Mammary epithelial cell (primary cell): ENCODE measurements at regions of chr3 and their contacts with region 1.

Region 1: GRCh38 chr3:169348929-169349613 is 314.4 kb downstream of the MECOM start:
- DNase-seq: peak; percentile 92
- H3K4me3 ChIP-seq: no peak overlapping the region
- H3K27ac ChIP-seq: peak overlapping the region; percentile 85
- H3K4me1 ChIP-seq: peaks cover 36% of the 10 kb centered on the region
- H3K27me3 ChIP-seq: no peaks in the 10 kb centered on the region
- CTCF ChIP-seq: no peak

Region 2: DNA sequence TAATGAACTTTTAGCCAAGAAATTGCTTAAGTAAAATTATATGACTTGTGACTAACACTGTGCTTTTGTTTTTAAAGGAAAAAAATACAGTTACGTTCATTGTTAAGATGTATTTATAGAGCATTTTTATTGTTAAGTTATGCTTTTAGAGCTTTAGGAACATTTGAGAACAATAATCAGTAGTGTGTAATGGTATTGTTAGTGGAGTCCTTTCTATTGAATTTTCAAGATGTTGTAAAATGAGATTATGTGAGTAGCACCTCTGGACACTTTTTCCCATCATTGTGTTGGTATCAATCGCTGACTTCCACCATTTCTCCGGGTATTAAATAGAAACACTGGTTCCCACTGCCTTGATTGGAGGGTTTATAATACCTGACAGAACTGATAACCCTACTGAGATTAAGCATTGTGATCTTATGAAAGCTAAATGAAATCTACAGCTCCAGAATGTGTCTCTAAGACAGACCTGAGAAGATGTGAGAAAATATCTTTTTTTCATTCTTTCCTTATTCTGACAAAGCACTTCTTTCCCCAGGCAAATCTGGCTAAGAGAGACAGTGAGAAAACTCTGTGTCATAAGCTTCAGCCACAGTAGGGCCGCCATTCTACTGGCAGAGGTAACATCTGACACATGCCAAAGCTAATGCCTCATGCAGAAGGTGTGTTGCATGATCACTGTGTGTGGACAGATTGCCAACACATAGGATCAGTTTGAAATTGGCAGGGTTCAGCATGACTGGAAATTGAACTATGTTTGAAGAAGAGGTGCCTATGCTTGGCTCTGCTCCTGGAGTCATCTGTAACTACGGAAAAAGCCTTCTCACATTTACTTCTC is 296.4 kb before region 1 on chr3:
- CTCF ChIA-PET with region 1: no interaction called
- dilution Hi-C with region 1: no loop called
- in situ Hi-C with region 1: no loop called
- intact Hi-C with region 1: loop called (anchors 10 kb)
- DNase-seq: peak; percentile 72
- H3K4me3 ChIP-seq: no peak overlapping the region
- H3K27ac ChIP-seq: peak overlapping the region; percentile 20
- H3K4me1 ChIP-seq: peaks cover 11% of the 10 kb centered on the region
- H3K27me3 ChIP-seq: no peaks in the 10 kb centered on the region
- CTCF ChIP-seq: no peak

Region 3: GRCh38 chr3:169430707-169431404 is 81.8 kb after region 1 on chr3:
- CTCF ChIA-PET with region 1: no interaction called
- dilution Hi-C with region 1: no loop called
- in situ Hi-C with region 1: no loop called
- intact Hi-C with region 1: no loop called
- DNase-seq: peak; percentile 80
- H3K4me3 ChIP-seq: no peak overlapping the region
- H3K27ac ChIP-seq: no peak overlapping the region
- H3K4me1 ChIP-seq: peaks cover 15% of the 10 kb centered on the region
- H3K27me3 ChIP-seq: no peaks in the 10 kb centered on the region
- CTCF ChIP-seq: no peak

Region 4: DNA sequence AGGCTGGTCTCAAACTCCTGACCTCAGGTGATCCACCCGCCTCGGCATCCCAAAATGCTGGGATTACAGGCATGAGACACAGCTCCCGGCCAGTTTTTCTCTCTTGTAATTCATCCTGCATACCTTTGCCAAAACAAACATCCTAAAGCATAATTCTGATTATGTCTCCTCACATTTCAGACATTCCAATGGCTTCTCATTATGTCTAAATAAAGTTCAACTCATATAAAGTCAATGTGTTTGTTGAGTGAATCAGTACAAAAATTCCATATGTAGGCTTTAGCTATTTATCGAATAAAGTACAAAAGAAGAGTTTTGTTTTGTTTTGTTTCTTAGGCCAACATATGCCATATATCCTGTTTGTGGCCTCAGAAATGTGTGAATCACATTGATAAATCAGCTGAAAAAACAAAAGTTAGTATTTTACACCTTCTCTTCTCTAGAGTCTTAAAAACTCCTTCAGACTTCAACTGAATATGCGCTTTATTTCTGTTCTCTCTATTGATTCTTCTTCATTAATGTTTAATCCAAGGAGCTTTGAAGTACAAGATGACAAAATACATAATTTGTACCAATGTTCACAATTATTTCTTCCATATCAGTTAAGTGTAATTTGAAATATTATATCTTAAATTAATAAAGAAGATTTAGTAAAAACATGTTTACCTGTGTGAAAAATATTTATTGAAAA is 148.6 kb after region 1 on chr3:
- CTCF ChIA-PET with region 1: no interaction called
- dilution Hi-C with region 1: no loop called
- in situ Hi-C with region 1: no loop called
- intact Hi-C with region 1: loop called (anchors 5 kb)
- DNase-seq: peak; percentile 72
- H3K4me3 ChIP-seq: no peak overlapping the region
- H3K27ac ChIP-seq: no peak overlapping the region
- H3K4me1 ChIP-seq: no peaks in the 10 kb centered on the region
- H3K27me3 ChIP-seq: no peaks in the 10 kb centered on the region
- CTCF ChIP-seq: no peak